T-cell (primary cell): ENCODE measurements at regions of chr16 and their contacts with region 1.

Region 1: GRCh38 chr16:47949714-47950113 is 206.1 kb downstream of the ABCC12 start:
- DNase-seq: no peak
- ATAC-seq: no peak
- H3K4me3 ChIP-seq: no peak overlapping the region
- H3K4me3 Mint-ChIP-seq: no peak overlapping the region
- H3K27ac ChIP-seq: no peak overlapping the region
- H3K27ac Mint-ChIP-seq: no peak overlapping the region
- H3K4me1 ChIP-seq: no peaks in the 10 kb centered on the region
- H3K4me1 Mint-ChIP-seq: no peaks in the 10 kb centered on the region
- H3K27me3 ChIP-seq: peaks cover 0 to 8% of the 10 kb centered on the region in 2 experiments
- H3K27me3 Mint-ChIP-seq: peaks cover 2 to 4% of the 10 kb centered on the region in 2 donors

Region 2: GRCh38 chr16:47916266-47916665 is 33.4 kb before region 1 on chr16:
- CTCF ChIA-PET with region 1: no interaction called
- POLR2A ChIA-PET with region 1: no interaction called
- DNase-seq: no peak
- ATAC-seq: no peak
- H3K4me3 ChIP-seq: no peak overlapping the region
- H3K4me3 Mint-ChIP-seq: no peak overlapping the region
- H3K27ac ChIP-seq: no peak overlapping the region
- H3K27ac Mint-ChIP-seq: no peak overlapping the region
- H3K4me1 ChIP-seq: no peaks in the 10 kb centered on the region
- H3K4me1 Mint-ChIP-seq: no peaks in the 10 kb centered on the region
- H3K27me3 ChIP-seq: no peaks in the 10 kb centered on the region
- H3K27me3 Mint-ChIP-seq: peaks cover 0 to 13% of the 10 kb centered on the region in 2 donors

Region 3: DNA sequence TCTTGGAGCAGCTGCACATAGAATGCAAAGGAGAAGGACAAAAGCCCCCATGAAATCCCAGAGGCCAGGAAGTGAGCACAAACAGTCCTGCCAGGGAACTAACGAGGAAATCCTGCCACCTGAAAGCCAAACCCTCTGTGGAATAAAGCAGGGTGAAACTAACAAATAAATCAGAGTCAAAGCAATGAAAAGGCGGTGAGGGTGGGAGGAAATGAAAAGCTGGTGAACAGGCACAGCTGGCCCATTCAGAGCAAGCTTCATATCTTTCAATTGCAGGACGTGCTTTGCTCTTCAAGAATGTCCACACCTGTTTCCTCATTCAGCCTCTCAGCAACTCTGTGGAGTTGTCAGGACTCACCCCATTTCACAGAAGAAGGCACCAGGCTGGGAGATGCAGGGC is 98.0 kb after region 1 on chr16:
- CTCF ChIA-PET with region 1: no interaction called
- POLR2A ChIA-PET with region 1: interaction called in 1 of 2 experiments, 11 read pairs
- DNase-seq: no peak
- ATAC-seq: no peak
- H3K4me3 ChIP-seq: no peak overlapping the region
- H3K4me3 Mint-ChIP-seq: no peak overlapping the region
- H3K27ac ChIP-seq: no peak overlapping the region
- H3K27ac Mint-ChIP-seq: no peak overlapping the region
- H3K4me1 ChIP-seq: no peaks in the 10 kb centered on the region
- H3K4me1 Mint-ChIP-seq: no peaks in the 10 kb centered on the region
- H3K27me3 ChIP-seq: peaks cover 0 to 9% of the 10 kb centered on the region in 2 experiments
- H3K27me3 Mint-ChIP-seq: peaks cover 2 to 11% of the 10 kb centered on the region in 2 donors